ENCODE measurements at regions of chr22 and their contacts with region 1.

Region 1: DNA sequence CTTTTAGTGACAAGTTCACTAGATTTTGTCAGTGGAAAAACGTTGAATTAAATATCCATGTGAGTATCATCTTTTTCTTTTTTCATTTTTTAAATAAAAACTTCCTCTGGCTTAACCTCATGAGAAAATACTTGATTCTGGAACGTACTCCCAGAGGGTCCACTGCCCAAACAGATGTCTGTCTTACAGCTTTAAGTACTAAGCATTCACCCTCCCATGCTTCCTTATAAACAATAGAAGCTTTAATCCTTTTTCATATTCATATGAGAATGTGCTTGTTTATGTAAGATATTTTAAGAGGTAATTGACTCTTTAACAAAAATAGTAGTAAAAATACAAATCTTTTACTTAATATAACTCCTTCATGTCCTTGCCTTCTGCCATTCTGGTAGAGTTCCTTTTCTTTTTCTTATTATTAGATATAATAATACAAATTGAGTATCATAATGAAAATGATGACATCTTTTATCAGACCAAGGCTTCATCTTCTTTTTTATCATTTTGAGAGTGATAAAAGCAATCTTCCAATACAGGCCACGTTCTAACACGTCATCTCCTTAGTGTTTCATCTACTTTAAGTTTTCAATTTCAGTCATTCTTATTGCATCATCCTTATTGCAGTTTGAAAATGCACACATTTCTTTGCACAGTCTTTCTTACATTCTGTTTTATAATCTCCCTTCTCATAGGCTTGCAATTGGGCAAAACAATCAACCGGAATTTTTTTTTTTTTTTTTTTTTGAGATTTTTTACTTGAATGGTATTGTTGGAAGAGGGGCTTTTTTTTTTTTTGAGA is 69.5 kb upstream of the MYO18B start:
- DNase-seq: no peak
- H3K4me3 Mint-ChIP-seq: no peak overlapping the region
- H3K27ac Mint-ChIP-seq: peak overlapping the region; percentile 81
- H3K4me1 Mint-ChIP-seq: peaks cover 15% of the 10 kb centered on the region
- H3K27me3 Mint-ChIP-seq: no peaks in the 10 kb centered on the region

Region 2: DNA sequence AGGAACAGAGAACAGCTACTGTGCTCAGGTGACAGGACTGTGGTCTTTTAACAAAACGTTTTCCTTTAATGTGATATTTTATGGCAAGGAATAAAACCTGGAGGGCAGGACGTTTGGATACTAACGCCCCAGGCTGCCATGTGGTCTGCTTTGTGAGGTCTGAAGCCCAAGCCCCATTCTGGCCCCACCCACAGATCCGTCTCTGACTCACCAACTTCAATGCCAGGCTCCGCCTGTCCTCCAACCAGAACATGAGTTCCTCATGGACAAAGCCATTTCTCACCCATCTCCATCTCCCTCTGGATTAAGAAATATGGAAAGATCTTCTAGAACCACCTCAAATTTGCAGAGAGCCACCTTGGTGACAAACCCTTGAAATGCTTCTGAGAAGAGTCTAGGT is 304.2 kb before region 1 on chr22:
- intact Hi-C with region 1: no loop called
- DNase-seq: no peak
- H3K4me3 Mint-ChIP-seq: no peak overlapping the region
- H3K27ac Mint-ChIP-seq: no peak overlapping the region
- H3K4me1 Mint-ChIP-seq: peaks cover 4% of the 10 kb centered on the region
- H3K27me3 Mint-ChIP-seq: no peaks in the 10 kb centered on the region

Region 3: DNA sequence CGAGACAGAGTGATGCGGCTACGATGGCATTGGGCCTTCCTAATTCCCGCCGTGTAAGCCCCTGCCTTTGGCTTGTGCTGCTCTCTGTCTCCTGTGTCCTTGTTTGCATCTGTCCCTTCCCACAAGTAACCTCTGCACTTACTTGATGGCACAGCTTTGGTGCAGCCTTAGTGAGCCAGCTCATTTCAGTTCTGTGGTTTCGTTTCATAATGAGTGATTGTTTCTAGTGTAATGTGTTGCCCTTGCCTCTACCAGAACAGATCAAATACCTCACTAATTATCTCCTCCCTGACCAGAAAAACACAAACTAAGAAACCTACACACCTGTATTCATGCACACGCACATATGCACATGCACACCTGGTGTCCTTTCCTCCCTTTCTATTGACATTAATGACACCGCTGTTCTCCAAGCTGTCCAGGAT is 49.2 kb before region 1 on chr22:
- intact Hi-C with region 1: loop called (anchors 1 kb)
- DNase-seq: no peak
- H3K4me3 Mint-ChIP-seq: peak overlapping the region; percentile 23
- H3K27ac Mint-ChIP-seq: peak overlapping the region; percentile 54
- H3K4me1 Mint-ChIP-seq: peaks cover 63% of the 10 kb centered on the region
- H3K27me3 Mint-ChIP-seq: no peaks in the 10 kb centered on the region

Region 4: GRCh38 chr22:25736378-25737011 is 64.0 kb after region 1 on chr22:
- intact Hi-C with region 1: loop called (anchors 1 kb)
- DNase-seq: peak; percentile 71
- H3K4me3 Mint-ChIP-seq: peak overlapping the region; percentile 71
- H3K27ac Mint-ChIP-seq: peak overlapping the region; percentile 98
- H3K4me1 Mint-ChIP-seq: peaks cover 64% of the 10 kb centered on the region
- H3K27me3 Mint-ChIP-seq: peaks cover 2% of the 10 kb centered on the region

Measured in activated T-helper 1 cell treated with anti-CD3 and anti-CD28 coated beads, Interleukin-12 subunit alpha, Interleukin-12 subunit beta, Interleukin-2, Interleukin-4 antibody, amounts not matched to agents 30 ng/mL and 10 ng/mL and 1 ng/mL, durations not matched to agents 14 hours and 24 hours and 36 hours (primary cell).